Activated CD8-positive, alpha-beta T cell treated with anti-CD3 and anti-CD28 coated beads, Interleukin-2, amount 10 ng/mL, durations not matched to agents 7 days and 5 days (primary cell): ENCODE measurements at regions of chr11 and their contacts with region 1.

Region 1: GRCh38 chr11:19962801-19963175 is 197.5 kb downstream of the DBX1 start:
- DNase-seq: no peak
- ATAC-seq: no peak
- H3K4me3 Mint-ChIP-seq: no peak overlapping the region
- H3K27ac Mint-ChIP-seq: no peak overlapping the region
- H3K4me1 Mint-ChIP-seq: peaks cover 14% of the 10 kb centered on the region
- H3K27me3 Mint-ChIP-seq: peaks cover 25% of the 10 kb centered on the region

Region 2: DNA sequence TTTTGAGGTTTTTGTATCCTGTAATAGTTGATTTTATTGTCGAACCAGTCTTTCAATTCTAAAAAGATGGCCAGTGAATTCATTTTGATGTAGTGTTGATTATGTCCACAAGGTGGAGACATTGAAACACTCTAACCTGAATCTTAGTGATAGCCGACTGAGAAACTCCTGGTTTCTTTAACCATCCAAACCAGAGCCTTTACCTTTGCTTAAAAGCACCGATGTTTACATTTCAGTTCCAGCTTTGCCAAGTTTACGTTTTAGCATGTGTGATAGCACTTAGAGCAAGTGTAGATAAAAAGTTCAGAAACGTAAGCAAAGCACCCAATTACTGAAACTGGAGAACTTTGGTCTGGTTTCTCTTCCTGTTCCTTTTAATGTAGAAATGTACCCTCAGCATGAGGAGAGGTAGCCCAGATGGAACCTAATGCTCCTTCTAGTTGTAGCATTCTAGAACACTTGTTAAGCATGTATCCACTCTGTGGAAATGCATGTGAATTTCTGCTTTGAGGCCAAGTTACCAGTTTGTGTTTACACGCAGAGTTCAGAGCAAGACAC is 11.2 kb before region 1 on chr11:
- CTCF ChIA-PET with region 1: interaction called, 10 read pairs
- POLR2A ChIA-PET with region 1: no interaction called
- DNase-seq: peak; percentile 22
- ATAC-seq: peak; percentile 49
- H3K4me3 Mint-ChIP-seq: peak overlapping the region; percentile 27
- H3K27ac Mint-ChIP-seq: no peak overlapping the region
- H3K4me1 Mint-ChIP-seq: peaks cover 6% of the 10 kb centered on the region
- H3K27me3 Mint-ChIP-seq: peaks cover 17% of the 10 kb centered on the region